Spleen (tissue), 13 donors: ENCODE measurements at regions of chr1 and their contacts with region 1.

Region 1: DNA sequence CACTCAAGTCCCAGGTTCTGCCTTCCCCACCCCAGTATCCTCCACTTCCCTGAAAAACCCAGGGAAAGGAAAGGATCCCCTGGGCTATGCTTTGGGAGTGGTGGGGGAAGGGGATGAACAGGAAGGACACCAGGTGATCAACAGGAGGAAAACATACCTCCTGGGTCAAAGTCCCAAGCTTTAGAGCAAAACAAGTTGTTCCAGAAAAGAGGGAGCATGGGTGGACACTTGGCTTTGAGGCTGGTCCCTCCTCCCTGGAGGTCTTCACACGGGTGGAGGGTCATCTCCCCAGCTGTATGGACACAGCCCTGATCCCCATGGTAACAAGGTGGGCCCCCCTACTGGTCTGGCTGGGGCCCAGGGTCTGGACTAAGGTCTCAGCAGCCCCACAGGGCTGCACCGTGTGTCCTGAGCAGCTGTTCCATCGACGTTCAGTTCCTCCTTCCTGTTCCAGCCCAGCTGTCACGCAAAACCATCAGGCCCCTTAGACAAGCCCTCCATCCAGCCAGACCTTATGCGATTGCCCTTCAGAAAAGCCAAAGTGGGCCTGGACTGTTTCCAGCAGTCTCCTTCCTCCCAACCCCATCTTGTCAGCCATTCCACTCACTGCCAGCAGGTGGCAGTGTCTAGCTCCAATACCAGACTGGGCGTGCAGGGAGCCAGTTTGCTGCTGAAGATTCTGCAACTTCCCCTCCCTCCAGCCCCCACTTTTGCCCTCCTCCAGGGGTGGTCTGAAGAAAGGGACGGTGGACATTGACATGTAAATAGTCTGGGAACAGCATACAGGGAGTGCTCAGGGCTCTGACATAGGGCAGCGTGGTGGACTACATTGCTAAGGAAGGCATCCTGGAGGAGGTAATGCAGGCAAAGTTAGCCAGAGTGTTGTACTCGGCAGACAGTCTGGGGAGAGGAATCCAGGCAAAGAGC is 2.9 kb upstream of the PDZK1IP1 start:
- DNase-seq: peak; percentile 90
- H3K4me3 ChIP-seq: no peak overlapping the region
- H3K27ac ChIP-seq: no peak overlapping the region
- H3K4me1 ChIP-seq: peaks cover 0 to 30% (median 11%) of the 10 kb centered on the region in 6 donors
- H3K27me3 ChIP-seq: peaks cover 0 to 7% (median 0%) of the 10 kb centered on the region in 7 donors
- CTCF ChIP-seq: peak; percentile 85 to 96 (median 94)
- POLR2A ChIP-seq: no peak

Region 2: GRCh38 chr1:47262787-47263413 is 70.2 kb after region 1 on chr1:
- intact Hi-C with region 1: loop called (anchors 5 kb)
- DNase-seq: no peak
- H3K4me3 ChIP-seq: no peak overlapping the region
- H3K27ac ChIP-seq: no peak overlapping the region
- H3K4me1 ChIP-seq: no peaks in the 10 kb centered on the region
- H3K27me3 ChIP-seq: no peaks in the 10 kb centered on the region
- CTCF ChIP-seq: peak; percentile 19 to 73 (median 64)
- POLR2A ChIP-seq: no peak

Region 3: DNA sequence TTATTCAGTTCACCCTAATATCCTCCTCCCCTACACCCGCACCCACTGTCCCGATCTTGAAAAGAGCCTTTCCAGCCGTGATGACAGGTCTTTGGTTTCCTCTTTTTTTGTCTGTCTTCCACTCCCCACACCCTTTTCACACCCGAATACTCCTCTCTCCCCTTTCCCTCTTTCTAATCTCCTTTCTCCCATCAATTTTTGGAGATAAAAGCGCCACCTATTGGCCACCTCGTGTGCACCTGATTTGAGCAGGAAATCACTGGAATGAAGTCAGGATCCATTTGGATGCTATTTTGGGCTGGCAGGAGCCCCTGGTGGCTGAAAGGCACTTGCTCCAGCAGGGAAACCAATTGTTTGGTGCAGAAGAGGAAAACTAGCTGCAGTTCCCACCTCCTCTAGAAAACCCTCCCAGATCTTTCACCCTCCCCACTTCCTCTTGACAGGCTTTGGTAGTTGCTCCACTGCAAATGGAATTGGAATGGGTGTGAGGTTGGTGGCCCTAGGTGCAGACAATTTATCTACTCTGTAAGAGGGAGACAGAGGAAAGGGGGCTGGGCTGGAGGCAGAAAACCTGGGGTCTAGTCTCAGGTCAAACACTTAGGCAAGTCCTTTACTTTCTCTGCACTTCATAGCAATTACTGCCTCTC is 231.7 kb after region 1 on chr1:
- intact Hi-C with region 1: loop called (anchors 10 kb)
- DNase-seq: no peak
- H3K4me3 ChIP-seq: no peak overlapping the region
- H3K27ac ChIP-seq: no peak overlapping the region
- H3K4me1 ChIP-seq: peaks cover 0 to 3% (median 0%) of the 10 kb centered on the region in 6 donors
- H3K27me3 ChIP-seq: peaks cover 0 to 65% (median 0%) of the 10 kb centered on the region in 7 donors
- CTCF ChIP-seq: peak in 8 of 11 experiments; percentile 16 to 63 (median 52)
- POLR2A ChIP-seq: no peak